ENCODE measurements at regions of chr6 and their contacts with region 1.

Region 1: GRCh38 chr6:83067448-83068413 is at the start of gene DOP1A:
- DNase-seq: peak; percentile 93
- H3K4me3 ChIP-seq: peak within 1 kb of the TSS; percentile 74 to 91 (median 75)
- H3K27ac ChIP-seq: peak within 1 kb of the TSS; percentile 12
- H3K4me1 ChIP-seq: peaks cover 28% of the 10 kb centered on the region
- H3K27me3 ChIP-seq: no peaks in the 10 kb centered on the region
- CTCF ChIP-seq: peak; percentile 95 to 98
- POLR2A ChIP-seq: peak; percentile 34
- total RNA-seq, gene DOP1A: 12.3 and 14.2 TPM in 2 replicates

Region 2: GRCh38 chr6:82260997-82261686 is 806.6 kb before region 1 on chr6:
- CTCF ChIA-PET with region 1: interaction called, 10 read pairs
- POLR2A ChIA-PET with region 1: no interaction called
- dilution Hi-C with region 1: no loop called
- intact Hi-C with region 1: no loop called
- DNase-seq: peak; percentile 14
- H3K4me3 ChIP-seq: no peak overlapping the region
- H3K27ac ChIP-seq: no peak overlapping the region
- H3K4me1 ChIP-seq: peaks cover 12% of the 10 kb centered on the region
- H3K27me3 ChIP-seq: no peaks in the 10 kb centered on the region
- CTCF ChIP-seq: no peak
- POLR2A ChIP-seq: no peak

Region 3: GRCh38 chr6:82750556-82750955 is 317.2 kb before region 1 on chr6:
- CTCF ChIA-PET with region 1: no interaction called
- POLR2A ChIA-PET with region 1: no interaction called
- dilution Hi-C with region 1: no loop called
- intact Hi-C with region 1: no loop called
- DNase-seq: no peak
- H3K4me3 ChIP-seq: no peak overlapping the region
- H3K27ac ChIP-seq: no peak overlapping the region
- H3K4me1 ChIP-seq: no peaks in the 10 kb centered on the region
- H3K27me3 ChIP-seq: no peaks in the 10 kb centered on the region
- CTCF ChIP-seq: no peak
- POLR2A ChIP-seq: no peak

Region 4: DNA sequence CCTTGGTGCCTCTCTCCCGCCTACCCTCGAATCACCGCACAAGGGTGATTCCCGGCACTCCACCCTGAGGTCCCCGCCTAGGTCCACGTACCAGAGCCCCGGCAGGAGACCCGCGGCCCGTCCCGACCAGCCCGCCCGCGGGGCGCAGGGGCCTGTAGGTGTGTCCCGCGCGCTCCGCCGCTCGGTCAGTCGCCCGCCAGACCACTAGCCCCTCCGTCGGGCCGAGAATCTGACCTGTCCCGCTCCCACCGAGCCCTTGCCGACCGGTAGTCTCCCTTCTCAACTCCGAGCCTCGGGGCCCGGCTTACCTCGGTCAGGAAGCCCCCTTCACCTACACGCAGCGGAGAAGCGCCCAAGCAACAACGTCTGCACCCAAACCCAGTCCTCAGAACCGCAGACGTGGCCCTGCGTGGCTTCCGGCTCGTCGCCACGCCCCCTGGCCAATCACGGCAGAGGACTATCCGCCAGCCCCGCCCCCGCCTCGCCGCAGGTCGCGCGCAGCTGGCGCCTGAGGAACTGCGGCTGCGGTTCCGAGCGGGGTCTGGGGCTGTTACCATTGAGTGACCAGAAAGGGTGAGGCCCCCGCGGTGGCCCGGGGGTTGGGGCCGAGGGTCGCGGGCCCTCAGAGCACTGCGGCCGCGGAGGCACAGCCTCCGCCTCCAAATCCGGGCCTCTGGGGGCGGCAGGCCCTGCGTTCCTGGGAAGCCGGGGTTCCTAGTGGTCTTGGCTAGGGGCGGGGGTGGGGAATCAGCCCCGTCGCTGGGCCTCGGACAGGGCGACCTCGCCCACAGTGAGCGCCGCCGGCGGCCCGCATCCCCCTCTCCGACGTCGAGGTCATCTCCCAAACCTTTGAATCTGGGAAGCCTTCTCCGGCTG is 125.4 kb after region 1 on chr6 and contains the starts of genes PGM3 and RWDD2A:
- CTCF ChIA-PET with region 1: interaction called, 46 read pairs
- POLR2A ChIA-PET with region 1: no interaction called
- dilution Hi-C with region 1: no loop called
- intact Hi-C with region 1: loop called (anchors 1 kb)
- DNase-seq: peak; percentile 93
- H3K4me3 ChIP-seq: peak within 1 kb of the TSS; percentile 52 to 99 (median 94)
- H3K27ac ChIP-seq: peak within 1 kb of the TSS; percentile 49
- H3K4me1 ChIP-seq: peaks cover 23% of the 10 kb centered on the region
- H3K27me3 ChIP-seq: no peaks in the 10 kb centered on the region
- CTCF ChIP-seq: no peak
- POLR2A ChIP-seq: peak; percentile 86
- total RNA-seq, gene PGM3: 70.7 and 74.8 TPM in 2 replicates
- total RNA-seq, gene RWDD2A: 4.3 and 4.5 TPM in 2 replicates

Region 5: GRCh38 chr6:83215131-83216047 is 147.7 kb after region 1 on chr6:
- CTCF ChIA-PET with region 1: interaction called, 431 read pairs
- POLR2A ChIA-PET with region 1: no interaction called
- dilution Hi-C with region 1: no loop called
- intact Hi-C with region 1: loop called (anchors 1 kb)
- DNase-seq: peak; percentile 82
- H3K4me3 ChIP-seq: no peak overlapping the region
- H3K27ac ChIP-seq: no peak overlapping the region
- H3K4me1 ChIP-seq: no peaks in the 10 kb centered on the region
- H3K27me3 ChIP-seq: no peaks in the 10 kb centered on the region
- CTCF ChIP-seq: peak; percentile 82 to 83
- POLR2A ChIP-seq: no peak

Region 6: GRCh38 chr6:83417880-83418663 is 350.3 kb after region 1 on chr6:
- CTCF ChIA-PET with region 1: interaction called, 8 read pairs
- POLR2A ChIA-PET with region 1: no interaction called
- dilution Hi-C with region 1: no loop called
- intact Hi-C with region 1: loop called (anchors 1 kb)
- DNase-seq: peak; percentile 49
- H3K4me3 ChIP-seq: no peak overlapping the region
- H3K27ac ChIP-seq: no peak overlapping the region
- H3K4me1 ChIP-seq: no peaks in the 10 kb centered on the region
- H3K27me3 ChIP-seq: no peaks in the 10 kb centered on the region
- CTCF ChIP-seq: peak; percentile 18 to 37
- POLR2A ChIP-seq: no peak

Region 7: GRCh38 chr6:83514866-83515466 is 447.2 kb after region 1 on chr6:
- CTCF ChIA-PET with region 1: interaction called, 211 read pairs
- POLR2A ChIA-PET with region 1: interaction called, 12 read pairs
- dilution Hi-C with region 1: no loop called
- intact Hi-C with region 1: loop called (anchors 1 kb)
- DNase-seq: peak; percentile 75
- H3K4me3 ChIP-seq: no peak overlapping the region
- H3K27ac ChIP-seq: no peak overlapping the region
- H3K4me1 ChIP-seq: peaks cover 9% of the 10 kb centered on the region
- H3K27me3 ChIP-seq: peaks cover 0 to 1% of the 10 kb centered on the region in 2 experiments
- CTCF ChIP-seq: peak; percentile 57 to 61
- POLR2A ChIP-seq: no peak